Endothelial cell of umbilical vein (primary cell): ENCODE measurements at regions of chr5 and their contacts with region 1.

Region 1: DNA sequence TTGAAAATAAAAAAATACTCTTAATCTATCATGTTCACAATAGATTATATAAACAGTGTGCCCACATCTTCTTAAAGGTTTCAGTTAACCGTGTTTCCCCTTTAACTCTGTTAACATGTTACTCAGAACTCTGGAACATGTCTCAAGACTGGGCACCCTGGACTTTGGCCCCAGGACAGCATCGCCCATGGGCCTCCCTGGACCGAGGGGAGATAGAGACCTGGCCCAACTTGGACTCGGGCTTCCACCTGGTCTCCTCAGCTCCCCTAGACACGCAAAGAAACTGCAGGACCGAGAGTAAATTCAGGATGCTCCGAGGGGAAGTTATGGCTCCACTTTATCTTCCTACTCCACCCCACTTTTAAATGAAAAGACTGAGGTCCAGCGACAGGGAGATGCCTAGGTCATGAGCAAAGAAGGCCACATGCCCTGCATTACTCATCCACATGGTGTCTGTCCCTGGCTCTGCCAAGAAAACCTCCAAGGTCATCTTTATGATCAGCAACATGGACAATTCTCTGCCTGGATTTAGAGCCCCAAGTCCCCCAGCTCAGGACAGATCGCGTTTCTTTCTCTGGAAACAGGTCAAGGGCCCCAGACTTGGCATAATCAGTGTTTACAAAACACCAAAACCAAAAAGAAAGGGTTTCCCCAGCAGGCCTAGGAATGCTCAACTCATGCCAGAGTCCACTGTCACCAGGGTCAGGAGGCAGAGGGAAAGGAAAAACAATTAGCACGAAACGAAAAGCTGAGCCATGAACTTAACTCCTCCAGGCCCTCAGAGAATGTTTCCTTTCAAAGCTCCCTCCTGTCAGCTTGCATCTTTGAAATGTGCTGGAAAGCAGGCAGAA is 17.4 kb downstream of the GPX3 start:
- DNase-seq: peak; percentile 86
- H3K4me3 ChIP-seq: no peak overlapping the region
- H3K27ac ChIP-seq: peak overlapping the region; percentile 36
- H3K4me1 ChIP-seq: peaks cover 21% of the 10 kb centered on the region
- H3K27me3 ChIP-seq: no peaks in the 10 kb centered on the region
- CTCF ChIP-seq: no peak
- POLR2A ChIP-seq: no peak

Region 2: DNA sequence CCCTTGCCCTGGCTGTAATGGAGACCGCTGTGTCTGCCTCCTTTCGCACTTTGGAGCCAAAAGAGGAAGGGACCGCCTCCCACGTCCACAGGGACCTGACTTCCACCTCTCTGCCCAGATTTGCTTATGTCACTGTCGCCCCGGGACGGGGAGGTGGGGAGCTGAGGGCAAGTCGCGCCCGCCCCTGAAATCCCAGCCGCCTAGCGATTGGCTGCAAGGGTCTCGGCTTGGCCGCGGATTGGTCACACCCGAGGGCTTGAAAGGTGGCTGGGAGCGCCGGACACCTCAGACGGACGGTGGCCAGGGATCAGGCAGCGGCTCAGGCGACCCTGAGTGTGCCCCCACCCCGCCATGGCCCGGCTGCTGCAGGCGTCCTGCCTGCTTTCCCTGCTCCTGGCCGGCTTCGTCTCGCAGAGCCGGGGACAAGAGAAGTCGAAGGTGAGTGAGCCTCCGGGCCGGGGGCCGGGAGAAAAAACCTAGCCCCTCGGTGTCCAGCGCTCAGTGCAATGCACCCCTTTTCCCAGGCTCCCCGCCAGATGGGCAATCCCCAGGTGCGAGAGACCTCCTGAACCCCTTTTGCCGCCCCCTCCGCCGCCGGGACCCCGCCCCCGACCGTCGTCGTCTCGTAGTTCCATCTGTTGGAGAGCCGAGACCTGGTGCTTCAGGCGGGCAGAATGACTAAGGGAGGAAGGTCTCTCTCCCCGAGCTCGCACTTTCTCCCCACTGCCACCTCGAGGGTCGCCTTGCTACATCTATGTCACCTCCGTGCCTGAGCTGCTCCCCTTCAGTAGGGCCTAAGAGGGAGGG is 17.3 kb before region 1 on chr5 and contains the start of gene GPX3:
- CTCF ChIA-PET with region 1: interaction called, 6 read pairs
- POLR2A ChIA-PET with region 1: no interaction called
- dilution Hi-C with region 1: no loop called
- intact Hi-C with region 1: loop called (anchors 1 kb)
- DNase-seq: peak; percentile 69
- H3K4me3 ChIP-seq: peak within 1 kb of the TSS; percentile 48 to 60 (median 57)
- H3K27ac ChIP-seq: no peak within 1 kb of the TSS
- H3K4me1 ChIP-seq: peaks cover 24% of the 10 kb centered on the region
- H3K27me3 ChIP-seq: peaks cover 3 to 9% of the 10 kb centered on the region in 2 experiments
- CTCF ChIP-seq: no peak
- POLR2A ChIP-seq: no peak
- total RNA-seq, gene GPX3: 3.5 and 5.1 TPM in 2 replicates